ENCODE measurements at regions of chr9 and their contacts with region 1.

Region 1: GRCh38 chr9:99118782-99119466 is 14.0 kb downstream of the TGFBR1 start:
- DNase-seq: peak in 1 of 2 donors; percentile 78
- ATAC-seq: peak; percentile 78 to 90 (median 89)
- H3K4me3 ChIP-seq: peak overlapping the region; percentile 6
- H3K4me3 Mint-ChIP-seq: peak overlapping the region; percentile 86
- H3K27ac ChIP-seq: peak overlapping the region; percentile 66
- H3K27ac Mint-ChIP-seq: peak overlapping the region; percentile 77 to 91
- H3K4me1 ChIP-seq: peaks cover 14% of the 10 kb centered on the region
- H3K4me1 Mint-ChIP-seq: peaks cover 87 to 90% of the 10 kb centered on the region in 2 donors
- H3K27me3 ChIP-seq: no peaks in the 10 kb centered on the region
- H3K27me3 Mint-ChIP-seq: no peaks in the 10 kb centered on the region
- CTCF ChIP-seq: no peak

Region 2: GRCh38 chr9:99104459-99105151 is 14.3 kb before region 1 on chr9 and contains the start of gene TGFBR1:
- intact Hi-C with region 1: loop called (anchors 2 kb)
- DNase-seq: peak; percentile 94 to 95
- ATAC-seq: peak; percentile 80 to 93 (median 88)
- H3K4me3 ChIP-seq: peak within 1 kb of the TSS; percentile 70
- H3K4me3 Mint-ChIP-seq: peak within 1 kb of the TSS; percentile 89
- H3K27ac ChIP-seq: peak within 1 kb of the TSS; percentile 77
- H3K27ac Mint-ChIP-seq: peak within 1 kb of the TSS; percentile 91 to 98
- H3K4me1 ChIP-seq: peaks cover 34% of the 10 kb centered on the region
- H3K4me1 Mint-ChIP-seq: peaks cover 84 to 86% of the 10 kb centered on the region in 2 donors
- H3K27me3 ChIP-seq: no peaks in the 10 kb centered on the region
- H3K27me3 Mint-ChIP-seq: no peaks in the 10 kb centered on the region
- CTCF ChIP-seq: no peak
- total RNA-seq, gene TGFBR1: 78.0 to 120 (median 113) TPM

Region 3: DNA sequence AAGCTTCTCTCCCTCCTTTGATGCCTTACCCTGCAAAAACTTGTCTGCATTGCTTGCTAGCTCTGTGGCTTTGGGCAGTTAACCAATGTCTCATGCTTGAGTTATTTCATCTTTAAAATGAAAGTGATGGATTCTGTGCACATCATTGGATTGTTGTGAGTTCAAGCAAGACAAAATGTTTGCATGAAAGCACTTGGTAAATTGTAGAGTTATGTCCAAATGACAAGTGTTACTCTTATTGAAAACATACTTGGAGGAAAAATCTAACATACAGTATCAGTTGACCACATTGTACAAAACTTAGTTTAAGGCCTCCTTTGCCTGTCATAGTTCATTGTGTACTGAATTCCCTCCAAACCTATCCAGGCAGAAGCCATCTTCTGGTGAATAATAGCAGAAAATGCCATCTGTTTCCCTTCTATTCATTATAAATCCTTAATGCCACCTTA is 16.0 kb after region 1 on chr9:
- intact Hi-C with region 1: loop called (anchors 2 kb)
- DNase-seq: peak in 1 of 2 donors; percentile 57
- ATAC-seq: peak; percentile 56 to 67 (median 63)
- H3K4me3 ChIP-seq: no peak overlapping the region
- H3K4me3 Mint-ChIP-seq: peak overlapping the region; percentile 65
- H3K27ac ChIP-seq: no peak overlapping the region
- H3K27ac Mint-ChIP-seq: peak overlapping the region; percentile 69 to 84
- H3K4me1 ChIP-seq: peaks cover 22% of the 10 kb centered on the region
- H3K4me1 Mint-ChIP-seq: peaks cover 83 to 85% of the 10 kb centered on the region in 2 donors
- H3K27me3 ChIP-seq: no peaks in the 10 kb centered on the region
- H3K27me3 Mint-ChIP-seq: no peaks in the 10 kb centered on the region
- CTCF ChIP-seq: no peak

Region 4: DNA sequence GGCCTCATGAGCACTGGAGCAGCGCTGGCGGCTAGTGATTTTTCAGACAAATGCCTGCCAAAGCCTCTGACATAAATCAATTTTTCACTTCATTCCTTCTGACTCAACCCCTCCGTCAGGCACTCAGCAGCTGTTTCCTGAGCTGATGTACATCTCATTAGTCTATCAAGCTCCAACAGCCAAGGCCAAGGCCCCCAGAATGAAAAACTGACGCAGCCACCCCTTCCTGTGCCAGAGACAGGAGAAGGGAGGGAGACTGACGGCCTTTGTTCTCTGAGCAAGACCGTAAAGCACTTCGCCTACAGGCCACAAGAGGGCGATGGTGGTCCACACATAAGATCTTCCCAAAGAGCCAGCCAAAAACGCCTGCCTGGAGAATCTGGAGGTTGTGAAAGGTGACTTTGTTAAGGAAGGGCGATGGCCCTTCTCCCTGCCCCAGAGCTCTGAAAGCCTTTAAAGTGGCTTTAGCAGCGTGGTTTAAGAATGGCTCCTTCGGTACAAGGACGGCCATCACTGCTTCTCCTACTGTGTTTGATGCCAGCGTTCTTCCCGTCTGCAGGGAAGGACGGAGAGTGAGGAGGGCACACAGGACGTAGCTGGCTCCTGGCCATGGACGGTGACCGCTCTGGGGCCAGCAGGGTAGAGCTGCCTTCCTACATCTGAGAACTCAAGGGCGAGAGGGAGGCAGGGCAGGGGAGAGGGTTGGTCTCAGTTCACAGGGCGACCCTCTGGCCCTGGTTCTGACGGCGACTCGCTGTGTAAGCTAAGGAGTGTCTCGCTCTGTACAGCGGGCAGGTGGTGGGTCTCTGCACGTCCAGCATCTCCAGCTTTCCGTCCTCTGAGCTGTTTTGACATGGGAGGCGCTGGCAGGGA is 65.8 kb after region 1 on chr9:
- intact Hi-C with region 1: no loop called
- DNase-seq: peak; percentile 70 to 91
- ATAC-seq: peak; percentile 87 to 92 (median 90)
- H3K4me3 ChIP-seq: no peak overlapping the region
- H3K4me3 Mint-ChIP-seq: peak overlapping the region; percentile 57
- H3K27ac ChIP-seq: peak overlapping the region; percentile 27
- H3K27ac Mint-ChIP-seq: peak overlapping the region; percentile 34 to 72
- H3K4me1 ChIP-seq: peaks cover 27% of the 10 kb centered on the region
- H3K4me1 Mint-ChIP-seq: peaks cover 17 to 22% of the 10 kb centered on the region in 2 donors
- H3K27me3 ChIP-seq: no peaks in the 10 kb centered on the region
- H3K27me3 Mint-ChIP-seq: peaks cover 12 to 15% of the 10 kb centered on the region in 2 donors
- CTCF ChIP-seq: peak; percentile 88